ENCODE measurements at regions of chr14 and their contacts with region 1.

Region 1: DNA sequence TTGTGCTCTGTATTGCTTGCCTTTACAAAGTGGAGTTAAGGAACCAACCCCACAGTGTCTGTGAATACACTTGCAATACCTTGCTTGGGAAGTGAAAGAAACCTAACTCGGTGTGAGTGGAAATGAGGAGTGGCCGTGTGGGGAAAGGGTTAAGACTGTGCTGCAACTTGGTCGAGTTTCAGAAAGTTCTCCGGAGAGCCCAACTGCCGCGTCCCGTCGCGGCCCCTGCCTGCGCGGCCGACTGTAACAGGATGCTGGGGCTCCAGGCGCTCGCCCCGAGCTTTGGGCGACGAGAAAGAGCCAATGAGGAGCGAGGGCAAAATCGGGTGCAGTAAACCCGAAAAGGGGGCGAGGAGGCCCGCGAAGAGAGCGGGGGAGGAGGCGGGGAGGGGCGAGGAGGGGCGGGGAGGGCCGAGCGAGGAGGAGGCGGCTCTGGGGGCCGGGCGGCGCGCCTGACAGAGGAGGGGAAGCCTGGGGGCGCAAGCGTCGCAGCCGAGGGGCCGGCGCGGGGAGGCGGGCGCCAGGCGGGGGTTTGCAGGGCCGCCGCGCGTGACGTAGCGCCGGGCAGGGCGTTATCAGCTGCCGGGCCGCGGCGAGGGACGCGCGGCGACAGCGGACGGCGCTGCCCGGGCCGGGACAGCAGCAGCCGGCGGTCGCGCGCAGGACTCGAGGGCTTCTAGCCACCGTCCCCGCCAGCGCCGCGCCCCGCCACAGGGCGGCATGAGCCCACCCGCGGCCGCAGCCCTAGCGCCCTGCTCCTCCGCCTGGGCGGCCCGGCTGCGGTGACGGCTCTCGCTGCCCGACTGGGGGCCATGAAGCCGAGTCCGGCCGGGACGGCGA is at the start of gene DACT1:
- DNase-seq: peak; percentile 45 to 74 (median 64)
- ATAC-seq: peak; percentile 80
- H3K4me3 ChIP-seq: peak within 1 kb of the TSS; percentile 80
- H3K4me3 Mint-ChIP-seq: peak within 1 kb of the TSS; percentile 89 to 99 (median 98)
- H3K27ac ChIP-seq: peak within 1 kb of the TSS; percentile 61
- H3K27ac Mint-ChIP-seq: peak within 1 kb of the TSS; percentile 84 to 95 (median 91)
- H3K4me1 ChIP-seq: peaks cover 0 to 22% of the 10 kb centered on the region in 2 donors
- H3K4me1 Mint-ChIP-seq: peaks cover 20 to 61% (median 45%) of the 10 kb centered on the region in 7 donors
- H3K27me3 ChIP-seq: no peaks in the 10 kb centered on the region
- H3K27me3 Mint-ChIP-seq: peaks cover 0 to 44% (median 6%) of the 10 kb centered on the region in 5 donors
- total RNA-seq, gene DACT1: 8.2 to 32.3 (median 15.0) TPM

Region 2: GRCh38 chr14:57390028-57390805 is 1247.4 kb before region 1 on chr14 and contains the start of gene NAA30:
- CTCF ChIA-PET with region 1: no interaction called
- POLR2A ChIA-PET with region 1: no interaction called
- intact Hi-C with region 1: loop called in 1 of 2 experiments (anchors 5 kb)
- DNase-seq: peak; percentile 80 to 97 (median 92)
- ATAC-seq: peak; percentile 98
- H3K4me3 ChIP-seq: peak within 1 kb of the TSS; percentile 68
- H3K4me3 Mint-ChIP-seq: peak within 1 kb of the TSS; percentile 86 to 98 (median 94)
- H3K27ac ChIP-seq: peak within 1 kb of the TSS; percentile 72
- H3K27ac Mint-ChIP-seq: peak within 1 kb of the TSS; percentile 88 to 99 (median 95)
- H3K4me1 ChIP-seq: peaks cover 11 to 13% of the 10 kb centered on the region in 2 donors
- H3K4me1 Mint-ChIP-seq: peaks cover 31 to 58% (median 40%) of the 10 kb centered on the region in 7 donors
- H3K27me3 ChIP-seq: no peaks in the 10 kb centered on the region
- H3K27me3 Mint-ChIP-seq: peaks cover 0 to under 1% (median 0%) of the 10 kb centered on the region in 5 donors
- total RNA-seq, gene NAA30: 14.6 to 19.6 (median 16.2) TPM

Region 3: GRCh38 chr14:58598028-58598803 is 39.4 kb before region 1 on chr14:
- CTCF ChIA-PET with region 1: interaction called, 28 read pairs
- POLR2A ChIA-PET with region 1: interaction called, 14 read pairs
- intact Hi-C with region 1: loop called (anchors 1 to 5 kb)
- DNase-seq: peak in 7 of 9 donors; percentile 54 to 81 (median 74)
- ATAC-seq: peak; percentile 92
- H3K4me3 ChIP-seq: peak overlapping the region; percentile 3
- H3K4me3 Mint-ChIP-seq: peak overlapping the region; percentile 49 to 78 (median 72)
- H3K27ac ChIP-seq: peak overlapping the region; percentile 7
- H3K27ac Mint-ChIP-seq: peak overlapping the region; percentile 42 to 92 (median 72)
- H3K4me1 ChIP-seq: peaks cover 0 to 46% of the 10 kb centered on the region in 2 donors
- H3K4me1 Mint-ChIP-seq: peaks cover 16 to 59% (median 47%) of the 10 kb centered on the region in 7 donors
- H3K27me3 ChIP-seq: no peaks in the 10 kb centered on the region
- H3K27me3 Mint-ChIP-seq: peaks cover 0 to 5% (median 0%) of the 10 kb centered on the region in 5 donors

Region 4: GRCh38 chr14:58749066-58749669 is 111.6 kb after region 1 on chr14:
- CTCF ChIA-PET with region 1: no interaction called
- POLR2A ChIA-PET with region 1: no interaction called
- intact Hi-C with region 1: loop called in 1 of 2 experiments (anchors 5 kb)
- DNase-seq: peak in 6 of 9 donors; percentile 7 to 40 (median 10)
- ATAC-seq: peak; percentile 75
- H3K4me3 ChIP-seq: no peak overlapping the region
- H3K4me3 Mint-ChIP-seq: peak overlapping the region; percentile 6 to 70 (median 53)
- H3K27ac ChIP-seq: no peak overlapping the region
- H3K27ac Mint-ChIP-seq: peak overlapping the region in 5 of 9 donors; percentile 12 to 69 (median 58)
- H3K4me1 ChIP-seq: no peaks in the 10 kb centered on the region
- H3K4me1 Mint-ChIP-seq: peaks cover 9 to 22% (median 15%) of the 10 kb centered on the region in 7 donors
- H3K27me3 ChIP-seq: no peaks in the 10 kb centered on the region
- H3K27me3 Mint-ChIP-seq: no peaks in the 10 kb centered on the region

Region 5: GRCh38 chr14:58942516-58942915 is 304.9 kb after region 1 on chr14:
- CTCF ChIA-PET with region 1: no interaction called
- POLR2A ChIA-PET with region 1: no interaction called
- intact Hi-C with region 1: no loop called
- DNase-seq: no peak
- ATAC-seq: no peak
- H3K4me3 ChIP-seq: no peak overlapping the region
- H3K4me3 Mint-ChIP-seq: no peak overlapping the region
- H3K27ac ChIP-seq: no peak overlapping the region
- H3K27ac Mint-ChIP-seq: no peak overlapping the region
- H3K4me1 ChIP-seq: no peaks in the 10 kb centered on the region
- H3K4me1 Mint-ChIP-seq: peaks cover 0 to 2% (median 0%) of the 10 kb centered on the region in 7 donors
- H3K27me3 ChIP-seq: no peaks in the 10 kb centered on the region
- H3K27me3 Mint-ChIP-seq: peaks cover 0 to 33% (median 6%) of the 10 kb centered on the region in 5 donors

Region 6: DNA sequence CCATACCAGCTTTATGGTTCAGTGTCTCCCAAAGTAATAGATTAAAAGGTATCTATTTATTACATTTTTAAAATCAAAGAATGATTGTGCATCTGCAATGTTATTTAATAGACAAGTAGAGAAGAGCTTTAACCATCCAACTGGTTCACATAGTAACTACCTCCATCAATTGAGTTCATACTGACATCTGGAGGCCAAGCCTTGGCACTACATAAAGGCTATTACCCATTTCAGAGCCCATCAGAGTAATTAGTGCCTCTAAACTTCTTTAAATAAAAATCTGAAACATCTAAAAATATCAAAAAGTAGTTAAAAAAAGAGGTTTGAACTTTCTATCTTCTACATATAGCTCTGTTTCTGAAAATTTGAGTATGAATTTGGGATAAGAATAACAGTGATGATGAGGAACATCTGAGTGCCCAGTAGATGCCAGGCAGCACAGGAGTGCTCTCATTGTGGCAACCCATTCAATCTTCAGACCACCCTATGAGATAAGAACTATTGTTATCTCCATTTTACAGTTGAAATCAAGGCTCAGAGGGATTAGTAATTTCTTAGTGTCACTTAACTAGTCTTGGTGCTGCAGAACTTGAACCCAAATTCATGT is 417.9 kb after region 1 on chr14:
- CTCF ChIA-PET with region 1: interaction called, 14 read pairs
- POLR2A ChIA-PET with region 1: no interaction called
- intact Hi-C with region 1: loop called (anchors 1 kb)
- DNase-seq: peak in 7 of 9 donors; percentile 10 to 60 (median 36)
- ATAC-seq: peak; percentile 83
- H3K4me3 ChIP-seq: no peak overlapping the region
- H3K4me3 Mint-ChIP-seq: no peak overlapping the region
- H3K27ac ChIP-seq: no peak overlapping the region
- H3K27ac Mint-ChIP-seq: no peak overlapping the region
- H3K4me1 ChIP-seq: no peaks in the 10 kb centered on the region
- H3K4me1 Mint-ChIP-seq: no peaks in the 10 kb centered on the region
- H3K27me3 ChIP-seq: no peaks in the 10 kb centered on the region
- H3K27me3 Mint-ChIP-seq: peaks cover 0 to 11% (median 5%) of the 10 kb centered on the region in 5 donors